GM10248 (cell line): ENCODE measurements at regions of chr16 and their contacts with region 1.

Region 1: DNA sequence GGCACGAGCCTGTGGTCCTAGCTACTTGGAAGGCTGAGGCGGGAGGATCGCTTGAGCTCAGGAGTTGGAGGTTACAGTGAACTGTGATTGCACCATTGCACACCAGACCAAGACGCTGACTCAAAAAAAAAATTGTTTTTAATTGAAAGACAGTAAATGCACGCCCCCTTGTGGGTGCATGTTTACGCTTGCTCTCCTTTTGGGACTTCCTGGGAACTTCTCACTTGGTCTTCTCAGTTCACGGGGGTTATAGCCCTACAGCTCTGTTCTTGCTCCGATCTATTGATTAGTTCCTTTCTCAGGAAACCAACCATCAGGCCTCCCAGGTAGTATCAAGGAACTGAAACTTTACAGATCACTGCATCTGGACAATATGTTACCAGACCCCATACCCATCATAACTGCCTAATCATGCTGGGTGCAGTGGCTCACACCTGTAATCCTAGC is 14.2 kb upstream of the RIPOR1 start:
- DNase-seq: peak; percentile 79
- CTCF ChIP-seq: peak; percentile 61

Region 2: GRCh38 chr16:67480833-67481560 is 33.4 kb before region 1 on chr16 and contains the start of gene ATP6V0D1:
- CTCF ChIA-PET with region 1: interaction called, 53 read pairs
- POLR2A ChIA-PET with region 1: no interaction called
- DNase-seq: peak; percentile 99
- CTCF ChIP-seq: peak; percentile 90

Region 3: GRCh38 chr16:67499106-67499505 is 15.3 kb before region 1 on chr16:
- CTCF ChIA-PET with region 1: interaction called, 238 read pairs
- POLR2A ChIA-PET with region 1: interaction called, 3 read pairs
- DNase-seq: no peak
- CTCF ChIP-seq: no peak

Region 4: DNA sequence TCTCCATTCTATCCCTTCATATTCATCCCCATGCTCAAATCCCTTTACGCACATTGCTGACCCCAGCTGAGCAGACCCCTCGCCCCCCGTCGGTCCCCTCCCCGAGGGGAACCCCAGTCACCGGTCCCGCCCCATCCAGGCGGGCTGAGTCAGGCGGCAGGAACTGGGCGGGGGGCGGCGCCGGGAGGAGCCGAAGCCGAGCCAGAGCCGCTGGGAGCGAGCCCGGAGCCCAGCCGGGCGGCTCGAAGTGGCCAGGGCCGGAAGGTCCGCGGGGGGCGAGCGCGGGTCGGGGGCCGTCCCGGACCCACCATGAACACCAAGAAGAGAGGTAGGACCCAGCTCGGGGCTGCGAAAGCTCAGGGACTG is 22.8 kb after region 1 on chr16:
- CTCF ChIA-PET with region 1: interaction called, 138 read pairs
- POLR2A ChIA-PET with region 1: no interaction called
- DNase-seq: peak; percentile 72
- CTCF ChIP-seq: no peak